ENCODE measurements at regions of chr4 and their contacts with region 1.

Region 1: DNA sequence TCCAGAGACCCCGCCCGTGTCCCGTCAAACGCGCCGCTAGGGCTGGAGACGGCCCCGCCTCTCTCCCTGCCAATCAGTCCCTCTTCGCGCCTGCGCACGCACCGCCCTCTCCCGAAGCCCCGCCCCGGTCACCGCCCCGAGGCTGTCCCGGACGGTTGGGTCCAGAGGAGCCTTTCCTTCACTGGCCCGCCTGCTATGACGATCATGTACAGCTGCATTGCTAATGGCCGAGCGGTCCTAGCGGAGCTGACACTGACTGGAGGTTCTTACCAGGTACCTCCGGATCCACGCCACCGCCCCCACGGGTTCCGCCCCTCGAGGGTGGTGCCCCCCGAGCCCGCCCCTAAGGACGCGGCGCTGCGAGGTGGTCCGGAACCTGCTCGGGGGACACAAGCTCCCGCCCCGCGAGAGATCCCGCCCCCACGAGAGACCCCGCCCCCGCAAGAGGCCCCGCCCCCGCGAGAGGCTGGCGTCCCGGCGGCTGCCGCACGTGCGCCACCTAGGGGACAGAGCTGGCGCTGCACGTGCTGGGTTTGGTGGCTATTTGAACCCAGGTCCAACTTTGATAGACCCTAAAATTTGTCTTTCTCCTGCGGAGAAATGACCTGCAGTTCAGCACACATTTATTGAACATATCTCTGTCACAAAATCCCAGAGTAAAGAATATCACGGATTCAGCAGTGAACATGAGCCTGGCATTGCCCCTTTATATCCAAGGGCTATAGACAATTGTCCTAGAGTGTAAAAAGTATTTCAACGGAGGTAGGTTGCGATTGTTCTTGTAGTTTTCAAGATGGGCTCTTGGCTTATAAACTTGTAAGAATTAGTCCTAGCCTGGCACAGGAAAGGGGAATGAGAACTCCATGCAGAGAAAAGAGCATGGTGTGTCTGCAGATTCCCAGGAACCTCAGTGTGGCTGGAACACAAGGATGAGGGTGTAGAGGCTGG is 88.7 kb downstream of the HNRNPD start:
- H3K4me3 Mint-ChIP-seq: peak overlapping the region; percentile 67
- H3K27ac Mint-ChIP-seq: peak overlapping the region; percentile 57
- H3K4me1 Mint-ChIP-seq: peaks cover 14% of the 10 kb centered on the region
- H3K27me3 Mint-ChIP-seq: peaks cover 20% of the 10 kb centered on the region

Region 2: GRCh38 chr4:82428969-82429727 is 144.0 kb after region 1 on chr4:
- intact Hi-C with region 1: loop called (anchors 2 kb)
- H3K4me3 Mint-ChIP-seq: peak overlapping the region; percentile 87
- H3K27ac Mint-ChIP-seq: peak overlapping the region; percentile 93
- H3K4me1 Mint-ChIP-seq: peaks cover 42% of the 10 kb centered on the region
- H3K27me3 Mint-ChIP-seq: no peaks in the 10 kb centered on the region

Measured in dendritic cell treated with granulocyte-macrophage colony-stimulating factor and Interleukin-4, amounts not matched to agents 40 ng/mL and 50 ng/mL, for 4 days (primary cell).